CD14-positive monocyte (primary cell): ENCODE measurements at regions of chr6 and their contacts with region 1.

Region 1: DNA sequence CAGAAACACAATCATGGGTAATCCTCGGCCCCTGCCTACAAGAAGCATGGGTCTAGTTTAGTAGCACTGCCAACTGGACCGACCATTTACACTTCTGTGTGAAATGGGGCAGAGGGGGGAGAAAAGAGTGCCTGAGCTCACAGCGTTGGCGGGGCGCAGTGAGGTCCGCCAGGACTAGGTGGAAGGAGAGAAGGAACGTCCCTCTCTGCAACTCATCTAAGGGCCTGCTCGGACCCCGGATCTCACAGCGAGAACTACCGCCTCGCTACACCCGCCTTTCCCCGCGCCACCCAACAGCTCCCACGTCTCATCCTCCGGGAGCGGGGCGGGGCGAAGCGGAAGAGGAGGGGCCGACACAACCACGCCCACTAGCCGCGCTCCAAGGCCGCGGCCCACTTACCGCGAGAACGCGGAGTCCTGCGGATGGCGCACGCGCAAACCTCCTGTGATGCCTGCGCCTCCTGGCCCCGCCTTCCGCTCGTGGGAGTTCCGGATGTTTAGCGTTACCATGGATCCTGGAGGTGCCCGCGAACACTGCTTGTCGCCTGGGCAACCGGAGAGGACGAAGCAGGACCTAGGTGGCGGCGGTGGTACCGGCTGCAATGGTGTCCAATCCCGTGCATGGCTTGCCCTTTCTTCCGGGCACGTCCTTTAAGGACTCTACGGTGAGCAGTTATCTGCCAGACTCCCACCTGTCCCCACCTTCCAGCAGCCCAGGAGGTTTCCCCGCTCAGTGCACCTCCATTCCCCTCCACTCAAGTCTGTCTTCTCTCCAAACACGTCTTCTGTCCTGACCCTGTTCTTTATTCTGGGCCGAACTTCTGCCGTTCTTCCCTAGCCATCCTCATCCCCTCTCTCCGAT is at the start of gene EFHC1:
- DNase-seq: peak; percentile 96 to 99 (median 97)
- H3K4me3 ChIP-seq: peak within 1 kb of the TSS; percentile 62 to 91 (median 81)
- H3K4me3 Mint-ChIP-seq: no peak within 1 kb of the TSS
- H3K27ac ChIP-seq: peak within 1 kb of the TSS in 1 of 2 donors; percentile 64
- H3K27ac Mint-ChIP-seq: peak within 1 kb of the TSS in 2 of 7 donors; percentile 67 to 72
- H3K4me1 ChIP-seq: peaks cover 14 to 20% of the 10 kb centered on the region in 2 donors
- H3K4me1 Mint-ChIP-seq: peaks cover 18% of the 10 kb centered on the region
- H3K27me3 ChIP-seq: no peaks in the 10 kb centered on the region
- H3K27me3 Mint-ChIP-seq: peaks cover 0 to 3% (median 1%) of the 10 kb centered on the region in 3 donors
- CTCF ChIP-seq: no peak
- polyA plus RNA-seq, gene EFHC1: 0.30 to 13.5 (median 2.3) TPM

Region 2: GRCh38 chr6:52577022-52577777 is 157.2 kb after region 1 on chr6 and contains the start of gene TRAM2:
- intact Hi-C with region 1: loop called (anchors 5 kb)
- DNase-seq: peak; percentile 57 to 66 (median 62)
- H3K4me3 ChIP-seq: peak within 1 kb of the TSS; percentile 78 to 87 (median 86)
- H3K4me3 Mint-ChIP-seq: peak within 1 kb of the TSS; percentile 88 to 95
- H3K27ac ChIP-seq: peak within 1 kb of the TSS; percentile 62 to 81
- H3K27ac Mint-ChIP-seq: peak within 1 kb of the TSS; percentile 75 to 88 (median 84)
- H3K4me1 ChIP-seq: peaks cover 39 to 51% of the 10 kb centered on the region in 2 donors
- H3K4me1 Mint-ChIP-seq: peaks cover 53% of the 10 kb centered on the region
- H3K27me3 ChIP-seq: no peaks in the 10 kb centered on the region
- H3K27me3 Mint-ChIP-seq: peaks cover 0 to 2% (median 0%) of the 10 kb centered on the region in 3 donors
- CTCF ChIP-seq: no peak
- polyA plus RNA-seq, gene TRAM2: 4.7 to 11.7 (median 5.9) TPM

Region 3: DNA sequence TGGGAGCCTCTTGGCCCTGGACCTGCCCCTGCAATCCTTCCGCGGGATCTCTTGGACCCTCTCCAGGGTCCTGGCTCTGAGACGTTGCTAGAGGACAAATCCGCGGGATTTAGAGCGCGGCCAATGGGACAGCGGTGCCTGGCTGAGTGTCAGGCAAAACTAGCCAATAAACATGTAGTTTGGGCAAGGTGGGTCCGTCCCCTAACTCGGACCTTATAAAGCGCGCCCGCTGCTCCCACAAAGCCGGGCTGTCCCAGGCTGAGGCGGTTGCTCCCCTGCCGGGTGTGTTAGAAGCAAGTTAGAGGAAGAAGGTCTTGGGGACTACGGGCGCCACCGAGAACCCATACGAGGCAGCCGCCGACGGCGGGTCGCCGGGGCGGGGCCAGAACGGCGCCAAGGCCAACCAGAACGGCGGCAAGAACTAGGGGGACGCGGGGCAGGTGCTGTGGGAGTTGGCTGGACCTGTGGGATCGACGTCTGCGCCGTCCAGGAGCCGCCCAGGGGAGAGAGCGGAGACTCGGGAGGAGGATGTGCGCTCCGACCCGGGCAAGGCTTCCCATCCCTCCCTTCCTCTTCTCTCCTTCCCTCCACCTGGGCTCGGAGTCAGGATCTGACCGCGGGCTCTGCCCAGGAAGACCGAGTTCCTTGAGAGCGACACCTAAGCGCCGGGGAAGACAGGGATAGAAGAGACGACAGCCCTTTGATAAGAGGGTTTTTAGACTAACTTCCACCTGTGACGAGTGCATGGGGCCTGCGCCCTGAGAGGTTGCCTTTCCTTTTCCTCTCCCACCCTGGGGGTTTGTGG is 244.3 kb after region 1 on chr6:
- intact Hi-C with region 1: loop called (anchors 1 to 2 kb)
- DNase-seq: peak; percentile 30 to 50 (median 43)
- H3K4me3 ChIP-seq: peak overlapping the region; percentile 20 to 79 (median 34)
- H3K4me3 Mint-ChIP-seq: no peak overlapping the region
- H3K27ac ChIP-seq: no peak overlapping the region
- H3K27ac Mint-ChIP-seq: no peak overlapping the region
- H3K4me1 ChIP-seq: peaks cover 21 to 35% of the 10 kb centered on the region in 2 donors
- H3K4me1 Mint-ChIP-seq: peaks cover 14% of the 10 kb centered on the region
- H3K27me3 ChIP-seq: peaks cover 13 to 27% of the 10 kb centered on the region in 2 donors
- H3K27me3 Mint-ChIP-seq: peaks cover under 1 to 11% (median 7%) of the 10 kb centered on the region in 3 donors
- CTCF ChIP-seq: no peak

Region 4: GRCh38 chr6:52995913-52996645 is 576.0 kb after region 1 on chr6:
- intact Hi-C with region 1: loop called in 1 of 2 experiments (anchors 5 kb)
- DNase-seq: peak in 2 of 3 donors; percentile 25 to 48
- H3K4me3 ChIP-seq: peak overlapping the region; percentile 3 to 83 (median 44)
- H3K4me3 Mint-ChIP-seq: peak overlapping the region; percentile 93 to 100
- H3K27ac ChIP-seq: peak overlapping the region; percentile 90 to 97
- H3K27ac Mint-ChIP-seq: peak overlapping the region; percentile 94 to 98 (median 97)
- H3K4me1 ChIP-seq: peaks cover 22 to 25% of the 10 kb centered on the region in 2 donors
- H3K4me1 Mint-ChIP-seq: peaks cover 39% of the 10 kb centered on the region
- H3K27me3 ChIP-seq: peaks cover 0 to 14% of the 10 kb centered on the region in 2 donors
- H3K27me3 Mint-ChIP-seq: peaks cover 21 to 23% (median 21%) of the 10 kb centered on the region in 3 donors
- CTCF ChIP-seq: no peak